Left lung (tissue), 14 donors: ENCODE measurements at regions of chr5 and their contacts with region 1.

Region 1: DNA sequence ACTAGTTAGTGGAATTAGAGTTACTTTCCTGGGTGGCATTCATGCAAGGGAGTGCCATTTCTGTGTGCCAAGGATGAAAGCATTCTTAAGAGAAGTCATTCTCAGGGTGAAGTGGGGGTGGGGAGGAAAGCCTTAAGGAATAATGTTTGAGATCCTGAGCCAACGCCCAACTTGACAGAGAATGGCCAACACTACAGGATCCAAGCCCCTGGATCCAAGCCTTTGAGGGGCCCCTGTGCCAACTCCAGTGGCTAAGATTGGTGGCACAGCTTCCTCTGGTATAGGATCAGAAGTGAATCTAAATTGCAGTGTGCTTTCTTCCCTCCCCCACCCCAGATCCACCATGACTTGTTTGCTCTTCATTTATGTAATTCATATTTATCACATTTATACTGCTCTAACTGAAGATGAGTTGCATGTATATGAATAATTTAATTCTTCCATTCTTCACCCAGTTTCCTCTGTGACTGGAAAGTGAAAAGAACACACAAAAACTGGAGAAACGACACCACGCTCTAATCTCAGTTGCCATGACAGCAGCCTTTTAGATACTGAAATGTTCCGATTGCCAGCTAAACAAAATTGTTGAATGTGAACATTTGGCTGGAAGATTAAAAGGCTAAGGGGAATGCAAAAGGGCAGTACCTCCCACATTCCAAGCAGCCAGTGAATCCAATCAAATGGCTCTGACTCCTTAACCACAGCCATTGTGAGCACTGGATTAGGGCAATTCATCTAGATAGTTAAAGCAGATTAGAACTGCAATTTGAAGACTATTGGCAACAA is 4.5 kb downstream of the ZNF608 start:
- DNase-seq: peak in 2 of 4 donors; percentile 79 to 84
- ATAC-seq: peak; percentile 50
- H3K4me3 ChIP-seq: peak overlapping the region; percentile 46 to 61
- H3K27ac ChIP-seq: peak overlapping the region; percentile 89 to 94
- H3K4me1 ChIP-seq: peaks cover 15 to 64% of the 10 kb centered on the region in 2 donors
- H3K27me3 ChIP-seq: peaks cover 0 to 28% of the 10 kb centered on the region in 2 donors
- CTCF ChIP-seq: no peak

Region 2: GRCh38 chr5:124649491-124650146 is 92.3 kb before region 1 on chr5:
- intact Hi-C with region 1: loop called in 1 of 2 experiments (anchors 5 kb)
- DNase-seq: peak; percentile 76 to 92 (median 88)
- ATAC-seq: peak; percentile 68
- H3K4me3 ChIP-seq: no peak overlapping the region
- H3K27ac ChIP-seq: peak overlapping the region; percentile 45 to 77
- H3K4me1 ChIP-seq: peaks cover 34 to 51% of the 10 kb centered on the region in 2 donors
- H3K27me3 ChIP-seq: peaks cover 0 to 73% of the 10 kb centered on the region in 2 donors
- CTCF ChIP-seq: no peak

Region 3: DNA sequence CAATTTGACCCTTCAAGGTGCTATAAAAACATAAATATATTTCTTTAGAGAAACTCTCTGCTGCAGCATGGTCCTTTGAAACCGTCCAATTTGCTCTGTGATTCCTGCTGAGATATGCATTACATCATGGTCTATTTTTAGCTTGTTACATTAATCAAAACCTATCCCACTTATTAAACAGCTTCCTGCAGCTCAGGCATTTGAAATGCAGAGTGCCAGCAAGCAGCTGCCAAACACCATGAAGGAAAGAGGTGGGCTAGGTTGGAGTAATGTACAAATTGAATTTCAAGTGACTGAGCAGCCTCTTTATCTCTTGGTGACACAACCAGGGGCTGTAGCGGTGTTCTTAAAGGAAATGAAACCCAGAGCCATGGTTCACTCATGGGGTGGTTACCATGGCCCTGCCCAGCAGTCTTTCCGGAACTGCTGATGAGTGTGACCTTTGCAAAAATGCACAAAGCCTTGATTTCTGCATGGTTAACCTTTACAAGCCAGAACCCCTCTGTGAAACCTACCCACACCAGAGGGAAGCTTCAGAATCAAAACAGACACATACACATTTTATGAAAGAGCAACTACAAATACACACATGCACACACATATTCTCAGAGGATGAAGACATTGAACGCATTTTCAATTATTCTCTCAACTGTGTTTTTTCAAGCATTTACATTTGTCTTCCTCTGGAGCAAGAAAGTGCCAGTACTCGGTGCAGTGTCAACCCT is 160.4 kb after region 1 on chr5:
- intact Hi-C with region 1: no loop called
- DNase-seq: peak in 1 of 4 donors; percentile 35
- ATAC-seq: peak; percentile 71
- H3K4me3 ChIP-seq: no peak overlapping the region
- H3K27ac ChIP-seq: peak overlapping the region in 1 of 2 donors; percentile 2
- H3K4me1 ChIP-seq: peaks cover 10 to 33% of the 10 kb centered on the region in 2 donors
- H3K27me3 ChIP-seq: no peaks in the 10 kb centered on the region
- CTCF ChIP-seq: no peak

Region 4: GRCh38 chr5:125236981-125237380 is 495.1 kb after region 1 on chr5:
- intact Hi-C with region 1: no loop called
- DNase-seq: no peak
- ATAC-seq: no peak
- H3K4me3 ChIP-seq: no peak overlapping the region
- H3K27ac ChIP-seq: no peak overlapping the region
- H3K4me1 ChIP-seq: no peaks in the 10 kb centered on the region
- H3K27me3 ChIP-seq: no peaks in the 10 kb centered on the region
- CTCF ChIP-seq: no peak